AG04450 (cell line): ENCODE measurements at regions of chr17 and their contacts with region 1.

Region 1: GRCh38 chr17:49997791-49998703 is 3.0 kb upstream of the DLX3 start:
- DNase-seq: peak; percentile 50
- H3K4me3 ChIP-seq: no peak overlapping the region
- H3K27ac ChIP-seq: no peak overlapping the region
- H3K27me3 ChIP-seq: peaks cover 65% of the 10 kb centered on the region
- CTCF ChIP-seq: peak; percentile 90

Region 2: GRCh38 chr17:49567871-49568694 is 430.0 kb before region 1 on chr17:
- CTCF ChIA-PET with region 1: interaction called, 22 read pairs
- POLR2A ChIA-PET with region 1: no interaction called
- DNase-seq: peak; percentile 16
- H3K4me3 ChIP-seq: peak overlapping the region; percentile 45
- H3K27ac ChIP-seq: no peak overlapping the region
- H3K27me3 ChIP-seq: peaks cover 32% of the 10 kb centered on the region
- CTCF ChIP-seq: peak; percentile 91

Region 3: DNA sequence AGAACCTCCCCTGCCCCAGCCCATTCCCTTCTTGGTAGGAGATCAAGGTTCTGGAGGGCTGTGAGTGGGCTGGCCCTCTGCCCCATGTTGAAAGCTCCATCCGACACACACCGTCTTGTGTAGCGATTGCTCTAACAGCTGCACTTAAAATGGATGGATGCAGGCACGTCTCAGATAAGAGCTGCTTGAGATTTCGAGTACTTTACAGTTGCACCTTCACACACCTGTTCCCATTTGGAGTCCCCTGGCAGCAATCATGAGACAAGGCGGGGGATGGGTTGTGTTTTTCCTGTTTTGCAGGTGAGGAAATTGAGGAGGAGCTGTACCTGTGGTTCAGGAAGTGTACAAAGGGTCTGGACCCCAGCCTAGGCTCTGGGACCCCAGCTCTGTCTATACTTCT is 124.6 kb before region 1 on chr17:
- CTCF ChIA-PET with region 1: interaction called, 32 read pairs
- POLR2A ChIA-PET with region 1: no interaction called
- DNase-seq: no peak
- H3K4me3 ChIP-seq: no peak overlapping the region
- H3K27ac ChIP-seq: no peak overlapping the region
- H3K27me3 ChIP-seq: peaks cover 48% of the 10 kb centered on the region
- CTCF ChIP-seq: no peak

Region 4: GRCh38 chr17:49952209-49952911 is 45.7 kb before region 1 on chr17:
- CTCF ChIA-PET with region 1: interaction called, 33 read pairs
- POLR2A ChIA-PET with region 1: interaction called, 6 read pairs
- DNase-seq: peak; percentile 11
- H3K4me3 ChIP-seq: no peak overlapping the region
- H3K27ac ChIP-seq: no peak overlapping the region
- H3K27me3 ChIP-seq: peaks cover 57% of the 10 kb centered on the region
- CTCF ChIP-seq: peak; percentile 79

Region 5: DNA sequence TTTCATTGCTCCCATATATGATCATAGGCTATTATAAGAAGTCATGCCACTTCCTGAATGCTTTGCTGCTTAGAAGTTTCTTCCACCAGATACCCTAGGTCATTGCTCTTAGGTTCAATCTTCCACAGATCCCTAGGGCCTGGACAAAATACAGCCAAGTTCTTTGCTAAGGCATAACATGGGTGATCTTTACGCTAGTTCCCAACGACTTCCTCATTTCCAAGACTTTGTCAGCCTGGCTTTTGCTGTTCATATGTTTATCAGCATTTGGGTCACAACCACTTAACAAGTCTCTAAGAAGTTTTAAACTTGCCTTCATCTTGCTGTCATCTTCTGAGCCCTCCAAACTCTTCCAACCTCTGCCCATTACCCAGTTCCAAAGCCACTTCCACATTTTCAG is 17.1 kb after region 1 on chr17:
- CTCF ChIA-PET with region 1: interaction called, 30 read pairs
- POLR2A ChIA-PET with region 1: no interaction called
- DNase-seq: no peak
- H3K4me3 ChIP-seq: no peak overlapping the region
- H3K27ac ChIP-seq: no peak overlapping the region
- H3K27me3 ChIP-seq: peaks cover 12% of the 10 kb centered on the region
- CTCF ChIP-seq: no peak

Region 6: GRCh38 chr17:50094753-50095619 is 96.9 kb after region 1 on chr17 and contains the start of gene PDK2:
- CTCF ChIA-PET with region 1: interaction called, 21 read pairs
- POLR2A ChIA-PET with region 1: no interaction called
- DNase-seq: peak; percentile 87
- H3K4me3 ChIP-seq: peak within 1 kb of the TSS; percentile 83
- H3K27ac ChIP-seq: peak within 1 kb of the TSS; percentile 70
- H3K27me3 ChIP-seq: no peaks in the 10 kb centered on the region
- CTCF ChIP-seq: no peak
- polyA plus RNA-seq, gene PDK2: 62.4 and 81.7 TPM in 2 replicates

Region 7: DNA sequence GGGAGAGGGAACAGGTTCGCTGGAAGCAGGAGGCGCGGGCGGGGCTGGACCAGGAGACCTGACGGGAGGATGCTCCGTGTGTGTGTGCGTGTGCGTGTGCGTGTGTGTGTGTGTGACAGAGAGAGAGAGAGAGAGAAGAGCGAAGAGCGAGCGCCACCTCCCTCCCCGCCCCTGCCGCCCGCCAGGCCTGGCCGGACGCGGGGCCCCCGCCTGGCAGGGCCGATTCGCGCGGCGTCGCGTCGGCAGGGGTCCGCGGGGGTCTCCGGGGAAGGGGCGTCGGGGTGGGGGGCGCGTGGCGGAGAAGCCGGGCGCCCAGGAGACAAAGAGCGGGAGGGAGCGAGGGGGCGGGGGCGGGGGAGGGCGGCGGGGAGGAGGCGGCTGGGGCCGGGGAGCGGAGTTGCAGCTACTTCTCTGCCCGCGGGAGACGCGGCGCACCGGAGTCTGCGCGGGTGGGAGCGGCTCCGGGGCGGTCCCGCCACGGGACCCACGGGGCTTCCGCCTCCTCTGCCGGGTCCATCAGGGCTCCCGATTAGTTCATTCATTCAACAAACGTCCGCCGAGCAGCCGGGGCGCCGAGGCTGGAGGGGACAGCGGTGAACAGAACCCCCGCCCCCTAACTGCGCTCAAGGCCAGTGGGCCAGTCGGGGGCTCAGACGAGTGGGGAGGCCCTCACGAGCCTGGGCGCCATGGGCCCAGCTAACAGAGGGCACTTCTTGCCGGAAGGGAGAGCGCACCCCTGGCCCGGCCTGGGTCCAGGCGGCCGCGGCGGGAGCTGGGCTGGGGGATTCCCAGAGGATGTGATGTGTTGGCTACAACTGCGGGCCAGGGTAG is 131.9 kb after region 1 on chr17 and contains the start of gene SAMD14:
- CTCF ChIA-PET with region 1: no interaction called
- POLR2A ChIA-PET with region 1: no interaction called
- DNase-seq: no peak
- H3K4me3 ChIP-seq: peak within 1 kb of the TSS; percentile 67
- H3K27ac ChIP-seq: peak within 1 kb of the TSS; percentile 52
- H3K27me3 ChIP-seq: no peaks in the 10 kb centered on the region
- CTCF ChIP-seq: no peak
- polyA plus RNA-seq, gene SAMD14: 3.5 and 5.3 TPM in 2 replicates